CD4-positive, alpha-beta memory T cell (primary cell): ENCODE measurements at regions of chr11 and their contacts with region 1.

Region 1: DNA sequence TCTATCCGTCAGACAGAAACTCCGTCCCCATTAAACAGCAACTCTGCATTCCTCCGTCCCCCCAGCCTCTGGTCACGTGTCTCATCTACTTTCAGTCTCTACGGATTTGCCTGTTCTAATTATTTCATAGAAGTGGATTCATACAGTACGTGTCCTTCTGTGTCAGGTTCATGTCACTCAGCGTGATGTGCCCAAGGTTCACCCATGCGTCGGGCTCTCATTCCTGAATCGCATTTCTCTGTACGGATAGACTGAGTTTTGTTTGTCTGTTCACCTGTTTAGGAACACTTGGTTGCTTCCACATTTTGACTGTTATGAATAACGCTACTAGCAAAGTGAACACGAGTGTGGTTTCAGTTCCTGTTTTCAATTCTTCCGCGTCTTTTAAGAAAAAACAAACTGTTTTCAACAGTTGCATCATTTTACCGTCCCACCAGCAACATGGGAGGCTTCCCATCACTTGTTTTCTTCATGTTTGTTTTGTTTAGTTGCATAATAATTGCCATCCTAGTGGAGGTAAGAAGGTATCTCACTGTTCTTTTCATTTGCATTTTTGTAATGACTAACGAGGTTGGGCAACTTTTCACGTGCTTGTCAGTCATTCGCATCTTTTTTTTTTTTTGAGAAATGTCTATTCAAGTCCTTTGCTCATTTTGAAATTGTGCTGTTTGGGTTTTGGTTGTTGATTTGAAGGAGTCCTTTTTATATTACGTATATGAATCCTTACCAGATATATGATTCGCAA is 8.9 kb upstream of the NLRP6 start:
- DNase-seq: peak; percentile 82 to 91 (median 89)
- H3K4me3 ChIP-seq: peak overlapping the region; percentile 6 to 62
- H3K4me3 Mint-ChIP-seq: peak overlapping the region; percentile 81 to 95 (median 87)
- H3K27ac ChIP-seq: peak overlapping the region; percentile 72
- H3K27ac Mint-ChIP-seq: peak overlapping the region; percentile 91 to 99 (median 96)
- H3K4me1 ChIP-seq: peaks cover 25% of the 10 kb centered on the region
- H3K4me1 Mint-ChIP-seq: peaks cover 20 to 34% (median 28%) of the 10 kb centered on the region in 4 donors
- H3K27me3 ChIP-seq: no peaks in the 10 kb centered on the region
- H3K27me3 Mint-ChIP-seq: no peaks in the 10 kb centered on the region

Region 2: GRCh38 chr11:227824-228379 is 41.4 kb before region 1 on chr11:
- CTCF ChIA-PET with region 1: no interaction called
- POLR2A ChIA-PET with region 1: no interaction called
- intact Hi-C with region 1: no loop called
- DNase-seq: no peak
- H3K4me3 ChIP-seq: no peak overlapping the region
- H3K4me3 Mint-ChIP-seq: no peak overlapping the region
- H3K27ac ChIP-seq: no peak overlapping the region
- H3K27ac Mint-ChIP-seq: peak overlapping the region in 2 of 7 donors; percentile 43 to 47
- H3K4me1 ChIP-seq: no peaks in the 10 kb centered on the region
- H3K4me1 Mint-ChIP-seq: peaks cover 0 to 11% (median 7%) of the 10 kb centered on the region in 4 donors
- H3K27me3 ChIP-seq: no peaks in the 10 kb centered on the region
- H3K27me3 Mint-ChIP-seq: no peaks in the 10 kb centered on the region

Region 3: DNA sequence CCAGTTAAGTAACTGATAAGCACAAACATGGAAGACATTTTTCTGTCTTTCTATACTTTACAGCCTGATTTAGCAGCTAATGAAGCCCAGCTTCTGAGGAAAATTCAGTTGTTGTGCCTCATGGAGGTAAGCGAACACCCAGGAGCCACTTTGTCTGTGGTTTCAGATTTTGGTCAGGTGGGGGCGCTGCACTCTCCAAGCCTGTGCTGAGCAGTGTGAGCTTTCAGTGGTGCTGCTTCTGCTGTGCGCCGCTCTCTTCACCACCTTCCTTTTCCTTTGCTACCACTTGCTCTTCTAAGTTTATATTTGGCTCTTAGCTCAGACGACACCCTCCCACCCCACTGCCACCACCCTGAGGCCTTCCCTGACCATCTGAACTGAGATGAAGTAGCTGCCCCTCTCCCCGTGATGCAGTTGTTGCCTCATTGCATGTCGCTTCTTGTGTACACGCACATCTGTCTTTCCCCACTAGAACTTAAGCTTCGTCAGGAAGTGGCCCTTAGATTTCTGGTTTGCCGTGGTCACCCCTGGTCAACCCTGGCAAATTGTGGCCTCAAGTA is 18.5 kb before region 1 on chr11:
- CTCF ChIA-PET with region 1: interaction called, 50 read pairs
- POLR2A ChIA-PET with region 1: interaction called, 11 read pairs
- intact Hi-C with region 1: loop called (anchors 2 kb)
- DNase-seq: peak; percentile 75 to 84 (median 81)
- H3K4me3 ChIP-seq: no peak overlapping the region
- H3K4me3 Mint-ChIP-seq: no peak overlapping the region
- H3K27ac ChIP-seq: peak overlapping the region; percentile 8
- H3K27ac Mint-ChIP-seq: peak overlapping the region; percentile 71 to 91 (median 81)
- H3K4me1 ChIP-seq: peaks cover 5% of the 10 kb centered on the region
- H3K4me1 Mint-ChIP-seq: peaks cover 6 to 9% (median 7%) of the 10 kb centered on the region in 4 donors
- H3K27me3 ChIP-seq: no peaks in the 10 kb centered on the region
- H3K27me3 Mint-ChIP-seq: no peaks in the 10 kb centered on the region

Region 4: GRCh38 chr11:288328-289144 is 19.2 kb after region 1 on chr11 and contains the start of gene PGGHG:
- CTCF ChIA-PET with region 1: interaction called, 14 read pairs
- POLR2A ChIA-PET with region 1: interaction called, 549 read pairs
- intact Hi-C with region 1: loop called (anchors 1 kb)
- DNase-seq: peak in 3 of 5 donors; percentile 49 to 60 (median 51)
- H3K4me3 ChIP-seq: peak within 1 kb of the TSS; percentile 83 to 95
- H3K4me3 Mint-ChIP-seq: peak within 1 kb of the TSS; percentile 88 to 99 (median 98)
- H3K27ac ChIP-seq: peak within 1 kb of the TSS; percentile 96
- H3K27ac Mint-ChIP-seq: peak within 1 kb of the TSS; percentile 95 to 100 (median 98)
- H3K4me1 ChIP-seq: peaks cover 38% of the 10 kb centered on the region
- H3K4me1 Mint-ChIP-seq: peaks cover 14 to 51% (median 31%) of the 10 kb centered on the region in 4 donors
- H3K27me3 ChIP-seq: no peaks in the 10 kb centered on the region
- H3K27me3 Mint-ChIP-seq: no peaks in the 10 kb centered on the region
- total RNA-seq, gene PGGHG: 304 TPM

Region 5: GRCh38 chr11:304915-305843 is 35.9 kb after region 1 on chr11:
- CTCF ChIA-PET with region 1: interaction called, 17 read pairs
- POLR2A ChIA-PET with region 1: interaction called, 26 read pairs
- intact Hi-C with region 1: loop called (anchors 5 kb)
- DNase-seq: peak; percentile 64 to 75 (median 67)
- H3K4me3 ChIP-seq: no peak overlapping the region
- H3K4me3 Mint-ChIP-seq: peak overlapping the region in 5 of 8 donors; percentile 36 to 76 (median 52)
- H3K27ac ChIP-seq: peak overlapping the region; percentile 6
- H3K27ac Mint-ChIP-seq: peak overlapping the region; percentile 1 to 89 (median 78)
- H3K4me1 ChIP-seq: peaks cover 42% of the 10 kb centered on the region
- H3K4me1 Mint-ChIP-seq: peaks cover 20 to 58% (median 34%) of the 10 kb centered on the region in 4 donors
- H3K27me3 ChIP-seq: no peaks in the 10 kb centered on the region
- H3K27me3 Mint-ChIP-seq: peaks cover 0 to 3% of the 10 kb centered on the region in 2 donors

Region 6: GRCh38 chr11:335779-336658 is 66.7 kb after region 1 on chr11:
- CTCF ChIA-PET with region 1: no interaction called
- POLR2A ChIA-PET with region 1: no interaction called
- intact Hi-C with region 1: no loop called
- DNase-seq: no peak
- H3K4me3 ChIP-seq: no peak overlapping the region
- H3K4me3 Mint-ChIP-seq: no peak overlapping the region
- H3K27ac ChIP-seq: no peak overlapping the region
- H3K27ac Mint-ChIP-seq: peak overlapping the region in 2 of 7 donors; percentile 25 to 57
- H3K4me1 ChIP-seq: peaks cover 15% of the 10 kb centered on the region
- H3K4me1 Mint-ChIP-seq: peaks cover 6 to 34% (median 14%) of the 10 kb centered on the region in 4 donors
- H3K27me3 ChIP-seq: no peaks in the 10 kb centered on the region
- H3K27me3 Mint-ChIP-seq: peaks cover 0 to 1% of the 10 kb centered on the region in 2 donors

Region 7: GRCh38 chr11:355581-356458 is 86.5 kb after region 1 on chr11:
- CTCF ChIA-PET with region 1: interaction called, 7 read pairs
- POLR2A ChIA-PET with region 1: interaction called, 13 read pairs
- intact Hi-C with region 1: no loop called
- DNase-seq: peak; percentile 85 to 90 (median 86)
- H3K4me3 ChIP-seq: peak overlapping the region in 1 of 2 donors; percentile 59
- H3K4me3 Mint-ChIP-seq: peak overlapping the region; percentile 77 to 91 (median 84)
- H3K27ac ChIP-seq: peak overlapping the region; percentile 89
- H3K27ac Mint-ChIP-seq: peak overlapping the region in 6 of 7 donors; percentile 96 to 99 (median 97)
- H3K4me1 ChIP-seq: peaks cover 20% of the 10 kb centered on the region
- H3K4me1 Mint-ChIP-seq: peaks cover 7 to 50% (median 29%) of the 10 kb centered on the region in 4 donors
- H3K27me3 ChIP-seq: no peaks in the 10 kb centered on the region
- H3K27me3 Mint-ChIP-seq: no peaks in the 10 kb centered on the region

Region 8: GRCh38 chr11:416757-417621 is 147.7 kb after region 1 on chr11:
- CTCF ChIA-PET with region 1: no interaction called
- POLR2A ChIA-PET with region 1: interaction called, 19 read pairs
- intact Hi-C with region 1: no loop called
- DNase-seq: peak in 4 of 5 donors; percentile 38 to 54 (median 45)
- H3K4me3 ChIP-seq: peak overlapping the region; percentile 17 to 73
- H3K4me3 Mint-ChIP-seq: peak overlapping the region; percentile 26 to 100 (median 96)
- H3K27ac ChIP-seq: peak overlapping the region; percentile 61
- H3K27ac Mint-ChIP-seq: peak overlapping the region in 4 of 7 donors; percentile 70 to 92 (median 83)
- H3K4me1 ChIP-seq: peaks cover 31% of the 10 kb centered on the region
- H3K4me1 Mint-ChIP-seq: peaks cover 4 to 42% (median 17%) of the 10 kb centered on the region in 4 donors
- H3K27me3 ChIP-seq: no peaks in the 10 kb centered on the region
- H3K27me3 Mint-ChIP-seq: no peaks in the 10 kb centered on the region